ENCODE measurements at regions of chr7 and their contacts with region 1.

Region 1: GRCh38 chr7:130365511-130366441 is 14.5 kb upstream of the CPA1 start:
- DNase-seq: peak; percentile 51
- ATAC-seq: peak; percentile 87
- H3K4me3 ChIP-seq: no peak overlapping the region
- H3K27ac ChIP-seq: peak overlapping the region; percentile 69
- H3K4me1 ChIP-seq: peaks cover 13% of the 10 kb centered on the region
- H3K27me3 ChIP-seq: no peaks in the 10 kb centered on the region
- CTCF ChIP-seq: no peak
- EP300 ChIP-seq: peak in 1 of 2 experiments; percentile 76; a peak in 2 of 4 replicates
- POLR2A ChIP-seq: peak; percentile 58; the same call in 1 of the 2 replicates
- RAD21 ChIP-seq: no peak

Region 2: GRCh38 chr7:130277763-130278643 is 87.8 kb before region 1 on chr7:
- CTCF ChIA-PET with region 1: no interaction called
- POLR2A ChIA-PET with region 1: no interaction called
- RAD21 ChIA-PET with region 1: no interaction called
- SMC1A ChIA-PET with region 1: no interaction called
- in situ Hi-C with region 1: no loop called
- intact Hi-C with region 1: no loop called
- DNase-seq: no peak
- ATAC-seq: no peak
- H3K4me3 ChIP-seq: no peak overlapping the region
- H3K27ac ChIP-seq: no peak overlapping the region
- H3K4me1 ChIP-seq: no peaks in the 10 kb centered on the region
- H3K27me3 ChIP-seq: peaks cover 1 to 4% of the 10 kb centered on the region in 2 experiments; a peak in 1 of 4 replicates
- CTCF ChIP-seq: peak in 1 of 3 experiments; percentile 11; a peak in 2 of 6 replicates
- EP300 ChIP-seq: no peak
- POLR2A ChIP-seq: no peak
- RAD21 ChIP-seq: no peak

Region 3: DNA sequence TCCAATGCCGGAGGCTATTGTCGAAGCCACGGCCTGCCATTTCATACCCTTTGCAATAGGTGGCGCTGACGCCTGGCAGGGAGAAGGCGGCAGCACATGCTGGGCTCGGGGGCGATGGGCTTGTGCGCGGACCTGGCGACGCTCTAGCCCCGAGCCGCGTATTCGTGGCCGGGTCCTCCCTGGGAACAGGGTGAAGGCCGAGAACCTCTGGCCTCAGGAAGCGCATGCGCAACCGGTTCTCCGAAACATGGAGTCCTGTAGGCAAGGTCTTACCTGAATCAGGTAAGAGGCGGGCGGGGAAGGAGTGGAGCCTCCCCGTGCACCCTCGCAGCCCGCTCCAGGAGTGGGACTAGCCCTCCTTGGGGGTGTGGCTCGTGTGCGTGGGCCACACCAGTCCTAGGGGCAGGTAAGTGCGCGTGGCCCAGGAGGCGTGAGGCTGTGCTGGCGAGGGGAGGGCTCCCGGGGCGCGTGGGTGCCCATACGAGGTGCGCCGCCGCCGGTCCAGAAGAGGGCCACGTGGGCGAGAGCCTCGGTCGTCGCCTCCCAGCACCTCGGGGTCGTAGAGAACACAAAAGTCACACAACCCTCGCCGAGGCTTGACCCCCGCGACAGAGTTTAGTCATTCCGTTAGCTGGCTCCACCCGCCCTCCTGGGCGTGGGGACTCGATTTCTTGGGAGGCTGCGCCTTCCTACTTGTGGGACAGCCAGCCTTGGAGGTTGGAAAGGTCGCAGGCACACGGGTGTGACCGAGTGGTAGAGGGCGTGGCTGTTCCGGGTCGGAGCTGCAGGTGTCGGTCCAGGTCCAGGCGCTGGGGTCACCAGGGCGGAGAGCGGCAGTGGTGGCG is 120.6 kb after region 1 on chr7:
- CTCF ChIA-PET with region 1: no interaction called
- POLR2A ChIA-PET with region 1: no interaction called
- RAD21 ChIA-PET with region 1: no interaction called
- SMC1A ChIA-PET with region 1: no interaction called
- in situ Hi-C with region 1: no loop called
- intact Hi-C with region 1: loop called (anchors 5 kb)
- DNase-seq: no peak
- ATAC-seq: peak; percentile 88
- H3K4me3 ChIP-seq: peak overlapping the region; percentile 48
- H3K27ac ChIP-seq: no peak overlapping the region
- H3K4me1 ChIP-seq: peaks cover 11% of the 10 kb centered on the region
- H3K27me3 ChIP-seq: no peaks in the 10 kb centered on the region; a peak in 1 of 4 replicates
- CTCF ChIP-seq: peak; percentile 58 to 77 (median 70)
- EP300 ChIP-seq: no peak
- POLR2A ChIP-seq: no peak
- RAD21 ChIP-seq: peak; percentile 64

Measured in GM12878 (cell line).